ENCODE measurements at regions of chr1 and their contacts with region 1.

Region 1: GRCh38 chr1:193537266-193538002 is 351.0 kb upstream of the B3GALT2 start:
- DNase-seq: peak; percentile 85
- H3K4me3 Mint-ChIP-seq: peak overlapping the region; percentile 17
- H3K27ac Mint-ChIP-seq: peak overlapping the region; percentile 74
- H3K4me1 Mint-ChIP-seq: peaks cover 47% of the 10 kb centered on the region
- H3K27me3 Mint-ChIP-seq: no peaks in the 10 kb centered on the region

Region 2: GRCh38 chr1:192808518-192809306 is 728.7 kb before region 1 on chr1 and contains the start of gene RGS2:
- CTCF ChIA-PET with region 1: no interaction called
- POLR2A ChIA-PET with region 1: no interaction called
- intact Hi-C with region 1: loop called (anchors 5 kb)
- DNase-seq: peak; percentile 91
- H3K4me3 Mint-ChIP-seq: peak within 1 kb of the TSS; percentile 83
- H3K27ac Mint-ChIP-seq: peak within 1 kb of the TSS; percentile 77
- H3K4me1 Mint-ChIP-seq: peaks cover 32% of the 10 kb centered on the region
- H3K27me3 Mint-ChIP-seq: no peaks in the 10 kb centered on the region
- total RNA-seq, gene RGS2: 5.4 to 6.4 TPM

Region 3: GRCh38 chr1:193121616-193122593 is 415.5 kb before region 1 on chr1 and contains the start of gene CDC73:
- CTCF ChIA-PET with region 1: no interaction called
- POLR2A ChIA-PET with region 1: no interaction called
- intact Hi-C with region 1: loop called (anchors 1 kb)
- DNase-seq: peak; percentile 99
- H3K4me3 Mint-ChIP-seq: peak within 1 kb of the TSS; percentile 85
- H3K27ac Mint-ChIP-seq: peak within 1 kb of the TSS; percentile 98
- H3K4me1 Mint-ChIP-seq: peaks cover 45% of the 10 kb centered on the region
- H3K27me3 Mint-ChIP-seq: no peaks in the 10 kb centered on the region
- total RNA-seq, gene CDC73: 47.9 to 49.3 TPM

Region 4: GRCh38 chr1:193417945-193418744 is 119.3 kb before region 1 on chr1:
- CTCF ChIA-PET with region 1: no interaction called
- POLR2A ChIA-PET with region 1: no interaction called
- intact Hi-C with region 1: loop called (anchors 1 kb)
- DNase-seq: no peak
- H3K4me3 Mint-ChIP-seq: peak overlapping the region; percentile 21
- H3K27ac Mint-ChIP-seq: peak overlapping the region; percentile 24
- H3K4me1 Mint-ChIP-seq: peaks cover 30% of the 10 kb centered on the region
- H3K27me3 Mint-ChIP-seq: no peaks in the 10 kb centered on the region

Region 5: GRCh38 chr1:193486671-193487229 is 50.7 kb before region 1 on chr1:
- CTCF ChIA-PET with region 1: no interaction called
- POLR2A ChIA-PET with region 1: no interaction called
- intact Hi-C with region 1: loop called (anchors 2 kb)
- DNase-seq: no peak
- H3K4me3 Mint-ChIP-seq: no peak overlapping the region
- H3K27ac Mint-ChIP-seq: no peak overlapping the region
- H3K4me1 Mint-ChIP-seq: peaks cover 23% of the 10 kb centered on the region
- H3K27me3 Mint-ChIP-seq: no peaks in the 10 kb centered on the region

Region 6: DNA sequence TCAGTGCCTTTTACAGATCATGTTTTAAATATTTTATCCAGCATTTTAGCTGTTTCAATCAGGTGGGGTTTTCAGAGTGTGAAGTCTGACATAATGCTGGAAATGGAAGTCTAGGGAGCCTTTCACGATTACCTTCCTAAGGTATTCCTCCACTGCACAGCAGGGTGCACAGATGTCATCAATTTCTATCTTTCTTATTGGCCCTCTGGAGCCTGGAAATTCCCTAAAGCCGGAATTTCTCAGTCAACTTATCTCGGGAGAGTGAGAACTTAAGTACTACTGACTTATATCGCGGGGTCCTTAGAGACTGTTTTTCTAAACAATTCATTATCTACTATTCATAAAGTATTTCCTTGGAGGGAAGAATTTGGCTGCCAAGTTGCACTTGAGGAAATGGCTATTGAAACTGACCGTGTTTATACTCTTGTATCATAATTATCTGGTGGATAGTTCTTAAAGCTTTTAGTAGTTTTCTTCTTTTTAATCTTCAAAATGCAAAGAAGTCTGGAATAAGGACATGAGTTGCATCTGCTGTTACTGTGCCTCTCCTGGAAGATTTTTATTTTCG is 39.3 kb before region 1 on chr1:
- CTCF ChIA-PET with region 1: no interaction called
- POLR2A ChIA-PET with region 1: no interaction called
- intact Hi-C with region 1: no loop called
- DNase-seq: no peak
- H3K4me3 Mint-ChIP-seq: no peak overlapping the region
- H3K27ac Mint-ChIP-seq: no peak overlapping the region
- H3K4me1 Mint-ChIP-seq: peaks cover 16% of the 10 kb centered on the region
- H3K27me3 Mint-ChIP-seq: no peaks in the 10 kb centered on the region

Region 7: DNA sequence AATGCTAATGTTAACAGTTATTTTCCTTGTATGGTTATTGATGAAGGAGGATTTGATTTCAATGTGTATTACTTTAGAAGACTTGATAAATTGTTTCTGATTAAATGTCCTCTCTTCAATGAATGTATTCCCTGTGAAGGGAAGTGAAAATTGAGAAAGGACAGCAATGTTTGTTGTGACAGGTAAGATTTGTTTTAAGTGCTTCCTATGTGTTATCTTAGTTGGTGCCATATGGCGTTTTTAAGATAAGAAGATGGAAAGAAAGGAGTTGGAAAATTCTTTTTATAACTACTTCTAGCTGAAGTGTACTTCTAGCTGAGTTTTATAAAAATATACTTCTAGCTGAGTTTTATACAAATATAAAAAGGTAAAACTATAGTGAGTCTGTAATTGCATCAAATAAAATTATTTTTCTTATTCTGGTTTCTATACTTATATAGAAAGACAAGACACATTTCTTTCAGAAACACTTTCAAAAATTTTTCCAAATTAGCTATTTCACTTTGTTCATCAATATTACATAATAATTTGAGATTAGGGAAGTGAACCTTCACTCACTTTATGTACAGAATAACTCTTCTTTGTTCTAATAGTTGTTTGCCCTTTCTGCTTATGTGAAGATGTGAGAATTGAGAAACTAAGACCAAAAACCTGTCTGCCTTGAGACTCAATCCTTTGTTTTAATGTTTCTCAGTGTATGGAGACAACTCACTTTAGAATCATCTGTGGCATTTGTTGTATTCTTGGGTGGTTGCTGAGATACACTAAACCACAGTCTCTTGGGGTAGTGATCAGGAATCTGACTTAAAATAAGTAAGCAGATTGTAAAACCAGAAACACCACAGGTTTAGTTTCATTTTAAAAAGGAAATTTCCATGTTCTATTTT is 31.9 kb after region 1 on chr1:
- CTCF ChIA-PET with region 1: interaction called, 3 read pairs
- POLR2A ChIA-PET with region 1: interaction called, 6 read pairs
- intact Hi-C with region 1: loop called (anchors 1 kb)
- DNase-seq: no peak
- H3K4me3 Mint-ChIP-seq: no peak overlapping the region
- H3K27ac Mint-ChIP-seq: peak overlapping the region; percentile 73
- H3K4me1 Mint-ChIP-seq: peaks cover 29% of the 10 kb centered on the region
- H3K27me3 Mint-ChIP-seq: no peaks in the 10 kb centered on the region

Region 8: DNA sequence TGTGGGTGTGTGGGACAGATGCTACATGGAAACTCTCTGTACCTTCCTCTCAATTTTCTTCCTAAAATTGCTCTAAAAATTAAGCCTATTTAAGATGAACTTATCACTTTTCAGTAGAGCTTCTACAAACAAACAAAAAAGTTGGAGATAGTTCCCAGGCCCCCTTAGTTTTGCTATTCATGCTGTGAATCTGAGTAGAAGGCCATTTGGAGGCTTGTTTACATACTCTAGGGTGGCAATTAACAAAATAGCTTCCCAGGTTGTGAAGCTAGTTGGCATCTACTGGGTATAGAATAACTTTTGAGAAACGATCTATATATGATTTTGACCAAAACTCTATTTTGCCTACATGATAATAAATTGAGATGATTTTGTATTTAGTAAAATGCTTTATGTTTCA is 190.4 kb after region 1 on chr1:
- CTCF ChIA-PET with region 1: no interaction called
- POLR2A ChIA-PET with region 1: no interaction called
- intact Hi-C with region 1: no loop called
- DNase-seq: no peak
- H3K4me3 Mint-ChIP-seq: no peak overlapping the region
- H3K27ac Mint-ChIP-seq: no peak overlapping the region
- H3K4me1 Mint-ChIP-seq: peaks cover 4% of the 10 kb centered on the region
- H3K27me3 Mint-ChIP-seq: no peaks in the 10 kb centered on the region

Region 9: DNA sequence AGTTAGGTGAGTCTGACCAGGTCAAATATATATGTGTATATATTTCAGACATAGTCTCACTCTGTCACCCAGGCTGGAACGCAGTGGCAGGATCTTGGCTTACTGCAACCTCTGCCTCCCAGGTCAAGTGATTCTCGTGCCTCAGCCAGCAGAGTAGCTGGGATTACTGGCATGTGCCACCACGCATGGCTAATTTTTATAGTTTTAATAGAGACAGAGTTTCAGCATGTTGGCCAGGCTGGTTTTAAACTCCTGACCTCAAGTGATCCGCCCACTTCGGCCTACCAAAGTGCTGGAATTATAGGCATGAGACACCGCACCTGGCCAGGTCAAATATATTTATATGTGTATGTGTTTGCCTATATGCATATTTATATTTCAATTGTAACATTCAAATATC is 230.5 kb after region 1 on chr1:
- CTCF ChIA-PET with region 1: no interaction called
- POLR2A ChIA-PET with region 1: no interaction called
- intact Hi-C with region 1: no loop called
- DNase-seq: no peak
- H3K4me3 Mint-ChIP-seq: no peak overlapping the region
- H3K27ac Mint-ChIP-seq: no peak overlapping the region
- H3K4me1 Mint-ChIP-seq: no peaks in the 10 kb centered on the region
- H3K27me3 Mint-ChIP-seq: no peaks in the 10 kb centered on the region

Region 10: DNA sequence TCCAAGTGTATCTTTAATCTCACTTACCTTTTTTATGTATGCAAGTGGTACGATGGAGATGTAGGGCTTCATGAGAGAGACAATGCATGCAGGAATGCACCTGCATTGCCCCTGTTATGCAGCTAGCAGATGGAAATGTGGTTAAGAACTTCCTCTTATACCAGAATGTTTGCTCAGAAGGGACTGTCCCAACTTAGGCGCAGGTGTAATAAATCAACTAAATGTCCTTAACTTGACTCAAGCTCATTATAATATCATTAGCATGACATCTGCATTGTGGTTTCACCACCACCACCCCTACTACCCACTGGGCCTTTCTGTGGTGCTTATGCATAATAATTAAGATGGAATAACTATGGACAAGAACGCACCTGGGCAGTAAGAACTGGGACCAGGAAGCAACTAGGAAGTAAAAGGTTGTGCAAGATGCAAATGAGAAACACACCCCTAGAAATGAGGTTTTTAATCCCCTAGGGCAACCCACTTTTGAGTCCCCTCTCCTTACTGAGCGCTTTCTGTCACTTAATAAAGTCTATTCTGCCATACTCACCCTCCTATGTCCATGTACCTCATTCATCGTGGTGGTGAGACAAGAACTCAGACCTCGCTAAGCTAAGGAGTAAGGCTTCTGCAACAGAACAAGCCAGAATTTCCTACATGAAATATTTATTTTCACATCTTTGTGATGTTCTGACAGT is 752.3 kb after region 1 on chr1:
- CTCF ChIA-PET with region 1: no interaction called
- POLR2A ChIA-PET with region 1: no interaction called
- intact Hi-C with region 1: loop called (anchors 1 kb)
- DNase-seq: peak; percentile 64
- H3K4me3 Mint-ChIP-seq: peak overlapping the region; percentile 43
- H3K27ac Mint-ChIP-seq: no peak overlapping the region
- H3K4me1 Mint-ChIP-seq: peaks cover 33% of the 10 kb centered on the region
- H3K27me3 Mint-ChIP-seq: no peaks in the 10 kb centered on the region

Measured in activated CD4-positive, alpha-beta memory T cell treated with anti-CD3 and anti-CD28 coated beads for 36 hours (primary cell).